ENCODE measurements at regions of chr3 and their contacts with region 1.

Region 1: DNA sequence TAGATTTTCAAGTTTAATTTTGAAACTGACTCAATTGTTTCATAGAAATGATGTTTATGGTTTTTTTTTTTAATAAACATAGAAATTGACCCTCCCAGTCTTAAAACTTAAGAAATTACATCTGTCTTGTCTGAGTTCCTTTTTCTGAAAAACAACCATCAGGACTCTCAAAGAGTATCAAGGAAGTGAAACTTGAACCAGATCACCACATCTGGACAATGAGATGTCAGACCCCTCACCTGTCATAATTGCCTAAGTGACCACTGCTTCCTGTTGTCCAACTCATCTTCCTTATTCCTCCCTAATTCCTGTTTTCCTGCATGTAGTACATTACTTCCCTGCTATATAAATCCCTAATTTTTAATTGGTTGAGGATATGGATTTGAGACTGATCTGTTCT is 441.5 kb upstream of the ARHGEF26 start:
- DNase-seq: no peak
- H3K4me3 ChIP-seq: no peak overlapping the region
- H3K27ac ChIP-seq: no peak overlapping the region
- H3K4me1 ChIP-seq: no peaks in the 10 kb centered on the region
- H3K27me3 ChIP-seq: no peaks in the 10 kb centered on the region
- CTCF ChIP-seq: no peak
- EP300 ChIP-seq: no peak
- POLR2A ChIP-seq: no peak

Region 2: DNA sequence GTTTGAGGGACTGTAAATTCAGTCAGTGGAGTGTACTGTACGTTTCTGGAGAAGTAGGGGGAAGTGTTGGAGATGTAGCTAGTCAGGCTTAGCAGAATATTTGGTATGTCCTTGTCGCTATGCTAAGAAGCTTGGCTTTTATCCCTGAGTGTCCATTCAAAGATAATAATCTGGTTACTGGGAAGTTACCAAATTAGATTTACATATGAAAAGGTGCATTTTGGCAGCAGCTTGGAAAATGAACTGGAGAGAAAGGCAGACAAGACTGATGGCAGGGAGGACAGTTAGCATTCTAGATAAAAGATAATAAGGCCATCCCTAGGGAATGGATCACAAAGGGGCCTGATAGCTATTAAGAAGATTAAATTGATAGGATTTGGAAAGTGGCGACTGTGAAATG is 786.1 kb before region 1 on chr3:
- in situ Hi-C with region 1: no loop called
- intact Hi-C with region 1: no loop called
- DNase-seq: no peak
- H3K4me3 ChIP-seq: no peak overlapping the region
- H3K27ac ChIP-seq: no peak overlapping the region
- H3K4me1 ChIP-seq: no peaks in the 10 kb centered on the region
- H3K27me3 ChIP-seq: no peaks in the 10 kb centered on the region
- CTCF ChIP-seq: no peak
- EP300 ChIP-seq: no peak
- POLR2A ChIP-seq: no peak

Region 3: DNA sequence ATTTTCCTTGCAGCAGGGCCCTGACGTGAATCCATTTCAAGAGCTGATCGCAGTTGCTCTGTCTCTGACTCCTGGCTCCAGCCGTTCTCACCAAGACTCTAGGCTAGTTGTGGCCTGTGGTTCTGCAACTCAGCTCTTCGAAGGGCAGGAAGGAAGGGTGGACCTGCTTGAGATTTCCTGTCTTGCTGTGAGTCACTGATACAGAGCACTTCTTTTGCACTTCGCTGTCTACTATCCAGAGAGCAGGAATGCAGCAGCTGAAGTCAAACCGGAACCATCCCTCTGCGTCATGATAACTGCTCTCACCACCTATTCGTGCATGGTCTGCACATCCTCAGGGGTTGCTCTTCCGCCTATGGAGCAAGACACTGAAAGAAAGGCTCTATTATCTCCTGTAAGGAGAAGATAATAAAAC is 458.0 kb before region 1 on chr3:
- in situ Hi-C with region 1: no loop called
- intact Hi-C with region 1: no loop called
- DNase-seq: peak; percentile 49
- H3K4me3 ChIP-seq: no peak overlapping the region
- H3K27ac ChIP-seq: peak overlapping the region; percentile 53 to 73 (median 60)
- H3K4me1 ChIP-seq: peaks cover 0 to 3% (median 0%) of the 10 kb centered on the region in 4 donors
- H3K27me3 ChIP-seq: no peaks in the 10 kb centered on the region
- CTCF ChIP-seq: no peak
- EP300 ChIP-seq: no peak
- POLR2A ChIP-seq: peak; percentile 36

Region 4: DNA sequence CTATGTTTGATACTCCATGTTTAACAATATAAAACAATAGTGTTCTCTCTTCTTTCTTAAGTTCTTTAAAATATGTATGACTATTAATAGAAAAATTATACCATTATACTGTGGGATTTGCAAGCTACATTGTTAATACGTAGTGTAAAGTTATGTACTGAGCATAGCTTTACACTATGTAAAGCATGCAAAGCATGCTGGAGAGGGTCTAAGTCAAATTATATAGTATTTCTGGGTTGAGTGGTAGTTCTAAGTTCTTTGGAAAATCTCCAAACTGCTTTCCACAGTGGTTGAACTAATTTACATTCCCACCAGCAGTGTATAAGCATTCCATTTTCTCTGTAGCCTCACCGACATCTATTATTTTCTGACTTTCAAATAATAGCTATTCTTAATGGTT is 264.7 kb before region 1 on chr3:
- in situ Hi-C with region 1: no loop called
- intact Hi-C with region 1: no loop called
- DNase-seq: no peak
- H3K4me3 ChIP-seq: no peak overlapping the region
- H3K27ac ChIP-seq: no peak overlapping the region
- H3K4me1 ChIP-seq: no peaks in the 10 kb centered on the region
- H3K27me3 ChIP-seq: no peaks in the 10 kb centered on the region
- CTCF ChIP-seq: no peak
- EP300 ChIP-seq: no peak
- POLR2A ChIP-seq: no peak

Region 5: DNA sequence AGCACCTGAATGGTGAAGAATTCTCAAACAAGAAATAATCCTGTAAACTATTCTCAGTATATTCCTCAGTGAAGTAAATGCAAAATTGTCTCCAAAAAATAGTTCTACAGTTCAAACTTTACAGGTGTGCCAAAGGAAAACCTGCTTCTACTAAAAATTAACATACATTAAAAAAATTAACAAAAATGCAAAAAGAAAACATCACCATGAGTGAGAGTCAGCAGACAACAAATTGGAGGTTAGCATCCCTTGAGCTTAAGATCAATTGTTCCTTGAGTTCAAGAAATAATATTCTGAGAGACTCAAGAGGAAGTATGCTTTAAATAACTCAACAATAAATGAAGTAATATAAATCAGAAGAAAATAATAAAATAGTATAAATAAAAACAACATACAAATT is 1122.0 kb after region 1 on chr3:
- in situ Hi-C with region 1: no loop called
- intact Hi-C with region 1: loop called (anchors 5 kb)
- DNase-seq: no peak
- H3K4me3 ChIP-seq: no peak overlapping the region
- H3K27ac ChIP-seq: no peak overlapping the region
- H3K4me1 ChIP-seq: no peaks in the 10 kb centered on the region
- H3K27me3 ChIP-seq: no peaks in the 10 kb centered on the region
- CTCF ChIP-seq: no peak
- EP300 ChIP-seq: no peak
- POLR2A ChIP-seq: no peak